ENCODE measurements at regions of chr6 and their contacts with region 1.

Region 1: DNA sequence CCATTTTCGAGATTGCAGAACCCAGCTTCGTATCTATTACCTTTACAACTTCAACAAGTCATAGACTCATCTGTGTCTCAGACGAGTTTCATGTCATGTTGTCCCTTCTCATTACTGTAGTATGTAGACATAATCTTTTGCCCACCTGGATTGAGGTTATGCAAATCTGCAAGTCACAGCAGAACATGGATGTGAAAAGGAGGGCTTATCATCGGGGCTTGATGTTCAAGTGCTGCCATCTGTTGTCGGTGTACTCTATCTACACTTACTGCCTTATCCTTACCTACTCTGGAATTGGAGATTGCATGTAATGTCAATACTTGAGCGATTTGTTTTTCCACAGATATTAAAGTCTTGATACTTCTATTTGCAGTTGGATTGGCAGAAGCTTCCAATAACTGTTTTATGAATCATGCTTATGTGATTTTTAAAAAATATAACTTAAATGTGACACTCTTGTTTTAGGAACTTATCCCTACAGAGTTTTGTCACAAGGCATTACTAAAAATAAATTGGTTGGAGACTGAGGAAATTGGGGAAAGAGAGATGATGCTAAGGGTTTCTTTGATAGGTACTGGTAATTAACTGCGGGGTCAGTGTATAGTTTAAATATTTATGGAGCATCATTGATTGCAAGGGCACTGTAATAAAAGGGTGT is 3.0 kb upstream of the GOPC start:
- DNase-seq: peak; percentile 26 to 45
- ATAC-seq: peak; percentile 24

Region 2: GRCh38 chr6:117346142-117346930 is 259.0 kb before region 1 on chr6:
- intact Hi-C with region 1: loop called in 1 of 2 experiments (anchors 5 kb)
- DNase-seq: no peak
- ATAC-seq: no peak

Region 3: DNA sequence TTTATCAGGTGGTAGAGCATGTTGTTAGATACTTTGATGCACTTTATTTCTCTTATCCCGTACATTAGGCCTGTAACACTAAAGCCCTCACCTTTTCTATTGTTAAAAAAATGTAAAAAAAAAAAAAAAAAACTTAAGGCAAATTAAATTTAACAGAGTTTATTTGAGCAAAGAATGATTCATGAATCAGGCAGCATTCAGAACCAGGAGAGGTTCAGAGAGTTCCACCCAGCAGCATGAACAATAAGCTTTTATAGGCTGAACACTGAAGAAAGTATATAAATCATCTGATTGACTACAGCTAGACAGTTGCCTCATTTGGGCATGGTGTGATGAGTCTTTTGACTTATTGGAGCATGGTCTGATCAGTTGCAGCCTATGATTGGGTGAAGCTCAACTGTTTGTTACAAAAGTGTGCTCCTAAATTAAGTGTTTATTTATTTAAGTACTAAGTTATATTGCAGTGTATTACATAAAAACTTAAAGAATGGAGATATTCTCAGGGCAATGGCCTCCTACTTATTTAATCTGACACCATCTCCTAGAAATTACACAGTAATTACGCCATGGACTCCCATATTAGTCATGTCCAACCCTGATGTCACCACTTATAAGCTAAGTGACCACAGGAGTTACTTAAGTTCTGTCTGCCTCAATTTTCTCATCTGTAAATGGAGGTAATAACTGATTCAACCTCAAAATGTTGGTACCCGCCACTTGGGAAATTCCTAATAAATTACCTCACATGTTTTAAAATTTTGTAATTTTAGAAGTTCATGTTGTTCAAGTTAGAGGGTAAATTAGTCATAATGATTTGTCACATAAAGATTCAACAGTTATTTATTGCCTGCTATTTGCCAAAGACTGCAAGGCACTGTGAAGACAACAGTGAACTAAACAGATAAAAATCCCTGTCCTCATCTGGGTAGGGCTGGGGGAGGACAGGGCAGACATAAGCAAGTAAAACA is 164.5 kb before region 1 on chr6:
- intact Hi-C with region 1: loop called in 1 of 2 experiments (anchors 5 kb)
- DNase-seq: no peak
- ATAC-seq: no peak

Region 4: DNA sequence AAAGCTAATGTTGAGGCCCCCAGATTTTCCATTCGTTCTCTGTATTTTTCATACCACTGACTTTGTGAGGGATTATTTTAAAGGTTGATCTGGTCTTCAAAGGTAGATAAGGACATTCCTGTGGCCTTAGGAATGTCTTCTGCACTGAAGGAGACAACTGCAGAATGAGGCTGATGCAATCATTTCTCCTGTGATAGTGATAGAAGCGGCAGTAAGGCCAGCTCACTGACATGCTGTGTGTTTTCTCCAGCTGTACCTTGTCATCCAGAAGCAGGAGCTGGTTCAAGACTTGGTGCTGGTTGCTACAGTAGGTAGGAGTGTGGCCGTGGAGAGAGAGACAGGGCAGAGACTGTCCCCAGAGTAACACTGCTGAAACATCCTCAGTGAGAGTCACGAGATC is 69.0 kb before region 1 on chr6:
- intact Hi-C with region 1: no loop called
- DNase-seq: no peak
- ATAC-seq: no peak